HepG2 (cell line): ENCODE measurements at regions of chr1 and their contacts with region 1.

Region 1: GRCh38 chr1:205458777-205459566 is 3.1 kb upstream of the BLACAT1 start:
- DNase-seq: peak; percentile 34
- ATAC-seq: peak; percentile 67
- H3K4me3 ChIP-seq: no peak overlapping the region
- H3K27ac ChIP-seq: no peak overlapping the region
- H3K4me1 ChIP-seq: peaks cover 24% of the 10 kb centered on the region; the same call in 1 of the 2 replicates
- H3K27me3 ChIP-seq: peaks cover 2 to 81% of the 10 kb centered on the region in 2 experiments; a peak in 4 of 5 replicates
- CTCF ChIP-seq: no peak
- EP300 ChIP-seq: no peak
- POLR2A ChIP-seq: no peak
- RAD21 ChIP-seq: no peak

Region 2: DNA sequence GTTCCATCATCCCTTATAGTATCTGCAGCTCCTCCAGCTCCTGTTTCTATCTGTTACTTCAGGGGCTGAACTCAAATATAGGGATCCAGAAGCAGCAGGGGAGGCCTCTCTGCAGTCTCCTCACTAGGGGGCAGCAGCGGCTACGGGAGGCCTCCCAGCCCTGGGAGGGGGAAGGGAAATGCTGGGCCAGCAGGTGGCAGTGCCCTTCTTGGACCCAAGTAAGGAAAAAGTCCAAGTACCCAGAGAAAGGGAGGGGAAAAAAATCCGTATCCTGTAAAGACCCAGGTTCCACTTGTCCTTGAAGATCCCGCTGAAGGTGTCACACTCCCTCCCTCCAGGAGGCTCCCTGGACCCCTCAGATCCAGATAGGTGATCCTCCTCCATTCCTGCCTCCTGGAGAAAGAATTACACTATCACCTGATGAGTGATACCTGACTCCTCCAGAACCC is 123.3 kb before region 1 on chr1:
- CTCF ChIA-PET with region 1: no interaction called
- POLR2A ChIA-PET with region 1: no interaction called
- in situ Hi-C with region 1: no loop called
- intact Hi-C with region 1: loop called (anchors 10 kb)
- DNase-seq: peak; percentile 68
- ATAC-seq: peak; percentile 92
- H3K4me3 ChIP-seq: no peak overlapping the region
- H3K27ac ChIP-seq: no peak overlapping the region
- H3K4me1 ChIP-seq: no peaks in the 10 kb centered on the region
- H3K27me3 ChIP-seq: peaks cover 4 to 43% of the 10 kb centered on the region in 2 experiments
- CTCF ChIP-seq: peak; percentile 92
- EP300 ChIP-seq: no peak
- POLR2A ChIP-seq: no peak
- RAD21 ChIP-seq: peak; percentile 81

Region 3: DNA sequence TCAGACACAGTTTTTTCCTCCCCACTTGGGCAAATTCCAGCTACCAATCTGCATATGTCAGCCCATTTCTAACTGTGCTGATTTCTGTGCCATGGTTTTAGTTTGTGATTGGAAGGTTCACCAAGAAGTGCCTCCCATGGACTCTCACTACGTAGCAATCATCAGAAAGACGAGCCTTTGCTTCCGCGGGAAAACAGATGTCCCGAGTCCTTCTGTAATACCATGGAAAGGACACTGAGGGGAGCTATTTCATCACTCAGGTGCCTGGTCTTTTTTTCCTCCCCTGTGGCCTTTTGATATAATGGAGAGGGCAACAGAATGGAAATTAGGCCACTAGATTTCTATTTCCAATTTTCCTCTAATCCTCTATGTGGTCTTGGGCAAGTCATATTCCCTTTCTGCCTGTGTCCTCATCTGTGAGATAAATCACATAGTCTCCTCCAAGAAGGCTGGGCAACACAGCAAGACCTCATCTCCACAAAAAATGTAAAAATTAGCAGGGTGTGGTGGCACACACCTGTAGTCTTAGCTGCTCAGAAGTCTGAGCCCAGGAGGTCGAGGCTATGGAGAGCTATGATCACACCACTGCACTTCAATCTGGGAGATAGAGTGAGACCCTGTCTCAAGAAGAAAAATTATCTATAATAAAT is 61.9 kb before region 1 on chr1:
- CTCF ChIA-PET with region 1: interaction called, 8 read pairs
- POLR2A ChIA-PET with region 1: no interaction called
- in situ Hi-C with region 1: no loop called
- intact Hi-C with region 1: loop called (anchors 2 kb)
- DNase-seq: peak; percentile 64
- ATAC-seq: peak; percentile 67
- H3K4me3 ChIP-seq: no peak overlapping the region
- H3K27ac ChIP-seq: no peak overlapping the region
- H3K4me1 ChIP-seq: peaks cover 12% of the 10 kb centered on the region
- H3K27me3 ChIP-seq: no peaks in the 10 kb centered on the region; a peak in 1 of 5 replicates
- CTCF ChIP-seq: peak; percentile 87
- EP300 ChIP-seq: no peak
- POLR2A ChIP-seq: no peak
- RAD21 ChIP-seq: peak; percentile 80

Region 4: GRCh38 chr1:205523891-205524793 is 65.2 kb after region 1 on chr1:
- CTCF ChIA-PET with region 1: no interaction called
- POLR2A ChIA-PET with region 1: no interaction called
- in situ Hi-C with region 1: no loop called
- intact Hi-C with region 1: no loop called
- DNase-seq: peak; percentile 68
- ATAC-seq: peak; percentile 70
- H3K4me3 ChIP-seq: no peak overlapping the region
- H3K27ac ChIP-seq: no peak overlapping the region
- H3K4me1 ChIP-seq: peaks cover 23% of the 10 kb centered on the region
- H3K27me3 ChIP-seq: no peaks in the 10 kb centered on the region
- CTCF ChIP-seq: peak; percentile 95
- EP300 ChIP-seq: no peak
- POLR2A ChIP-seq: no peak
- RAD21 ChIP-seq: peak; percentile 91